SK-N-SH (cell line): ENCODE measurements at regions of chr2 and their contacts with region 1.

Region 1: DNA sequence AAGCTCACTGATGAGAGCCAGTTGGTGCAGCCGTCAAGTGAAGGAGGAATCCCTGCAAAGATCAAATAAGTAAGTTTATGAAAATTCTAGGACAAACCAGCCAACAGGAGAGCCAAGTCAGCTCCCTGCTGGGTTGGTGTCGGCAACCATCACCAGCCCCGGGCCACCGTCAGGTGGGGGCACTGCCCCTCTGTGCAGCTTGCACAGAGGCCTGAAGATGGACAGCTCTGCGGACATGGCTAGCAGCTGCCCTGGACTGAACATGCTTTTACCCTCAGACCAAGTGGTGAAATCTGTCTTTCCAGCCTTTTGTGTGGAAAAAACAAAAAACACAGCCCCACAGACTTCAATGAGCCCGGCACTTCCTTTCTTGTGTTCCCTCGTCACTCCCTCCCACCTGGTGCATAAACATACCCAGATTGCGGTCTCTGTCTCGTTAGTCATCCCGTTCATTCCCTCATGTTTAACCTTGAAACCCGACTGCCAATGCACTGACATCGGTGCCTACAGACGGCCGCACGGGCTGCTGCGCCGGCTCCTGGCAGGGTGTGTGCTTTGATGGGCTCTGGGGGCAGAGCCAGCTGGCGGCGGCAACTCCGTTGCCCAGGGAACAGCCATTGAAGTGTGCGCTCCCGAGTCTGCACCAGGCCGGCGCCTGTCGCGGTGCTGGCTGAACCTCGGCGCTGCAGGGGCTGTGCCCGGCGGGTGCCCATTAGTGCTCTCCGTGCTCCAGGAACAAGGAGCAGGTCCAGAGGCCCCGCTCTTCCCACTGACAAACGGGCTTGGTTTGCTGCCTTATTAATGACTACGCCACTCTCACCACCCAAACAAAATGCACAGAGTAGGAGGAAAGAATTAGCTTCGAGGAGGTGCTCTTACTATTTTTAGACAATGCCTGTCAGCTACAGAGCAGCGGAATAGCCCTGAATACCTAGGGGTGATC is 95.3 kb downstream of the EIPR1 start:
- DNase-seq: peak; percentile 99
- H3K4me3 ChIP-seq: peak overlapping the region; percentile 22 to 31; a peak in 2 of 4 replicates
- H3K27ac ChIP-seq: peak overlapping the region in 1 of 2 experiments; percentile 100; a peak in 2 of 4 replicates
- H3K4me1 ChIP-seq: peaks cover 12 to 82% of the 10 kb centered on the region in 2 experiments; a peak in 3 of 4 replicates
- H3K27me3 ChIP-seq: no peaks in the 10 kb centered on the region
- CTCF ChIP-seq: no peak
- EP300 ChIP-seq: peak in 1 of 2 experiments; percentile 78; a peak in 2 of 4 replicates
- RAD21 ChIP-seq: peak; percentile 58

Region 2: DNA sequence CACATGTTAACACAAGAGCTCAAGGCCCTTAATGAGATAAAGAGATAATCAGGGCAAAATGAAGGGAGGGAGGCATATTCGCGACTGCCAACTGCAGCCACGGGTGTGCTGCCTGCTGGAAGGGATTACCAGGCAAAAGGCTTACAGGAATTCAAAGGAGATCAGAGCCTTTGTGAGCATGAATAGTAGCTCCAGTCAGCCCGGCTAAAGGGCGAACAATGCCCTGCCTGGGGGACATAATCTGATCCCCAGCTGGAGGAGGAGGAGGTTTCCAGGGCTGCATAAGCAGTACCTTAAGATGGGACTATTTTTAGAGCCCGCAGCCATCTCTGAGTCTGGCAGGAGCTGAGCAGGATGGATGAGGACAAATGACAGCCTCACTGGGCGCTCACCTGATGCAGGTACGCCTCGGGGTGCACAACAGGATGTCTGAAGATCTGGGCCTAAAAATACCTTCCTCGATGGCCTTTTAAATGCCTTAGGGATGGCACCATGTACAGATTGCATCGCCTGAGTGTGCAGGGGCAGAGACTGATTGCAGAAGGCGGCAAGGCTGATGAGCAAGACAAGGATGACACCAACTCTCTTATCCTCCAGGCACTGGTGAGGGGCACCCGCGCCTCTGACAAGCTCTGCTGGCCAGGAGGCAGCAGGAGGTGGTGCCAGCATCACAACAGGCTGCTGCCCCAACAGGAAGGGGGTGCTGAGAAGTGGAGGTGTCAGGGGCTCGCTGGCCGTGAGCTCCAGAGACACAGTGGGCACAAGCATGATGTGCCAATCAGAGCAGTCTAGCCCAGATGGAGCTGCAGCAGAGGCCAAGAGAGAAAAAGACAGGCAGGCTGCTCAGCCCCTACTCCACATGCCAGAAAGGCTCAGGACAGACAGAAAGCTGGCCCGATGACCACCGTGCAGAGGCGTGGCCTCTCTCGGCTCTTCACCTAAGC is 16.1 kb before region 1 on chr2:
- CTCF ChIA-PET with region 1: interaction called, 10 read pairs
- POLR2A ChIA-PET with region 1: interaction called, 3 read pairs
- DNase-seq: no peak
- H3K4me3 ChIP-seq: no peak overlapping the region
- H3K27ac ChIP-seq: peak overlapping the region in 1 of 2 experiments; percentile 30; a peak in 1 of 4 replicates
- H3K4me1 ChIP-seq: peaks cover 0 to 30% of the 10 kb centered on the region in 2 experiments; a peak in 1 of 4 replicates
- H3K27me3 ChIP-seq: no peaks in the 10 kb centered on the region
- CTCF ChIP-seq: no peak
- EP300 ChIP-seq: no peak
- RAD21 ChIP-seq: no peak